OCI-LY7 (cell line): ENCODE measurements at regions of chr12 and their contacts with region 1.

Region 1: GRCh38 chr12:11486623-11487444 is 91.5 kb upstream of the PRB2 start:
- DNase-seq: peak; percentile 92
- H3K4me3 ChIP-seq: no peak overlapping the region
- H3K27ac ChIP-seq: no peak overlapping the region
- H3K4me1 ChIP-seq: no peaks in the 10 kb centered on the region
- CTCF ChIP-seq: peak; percentile 100

Region 2: DNA sequence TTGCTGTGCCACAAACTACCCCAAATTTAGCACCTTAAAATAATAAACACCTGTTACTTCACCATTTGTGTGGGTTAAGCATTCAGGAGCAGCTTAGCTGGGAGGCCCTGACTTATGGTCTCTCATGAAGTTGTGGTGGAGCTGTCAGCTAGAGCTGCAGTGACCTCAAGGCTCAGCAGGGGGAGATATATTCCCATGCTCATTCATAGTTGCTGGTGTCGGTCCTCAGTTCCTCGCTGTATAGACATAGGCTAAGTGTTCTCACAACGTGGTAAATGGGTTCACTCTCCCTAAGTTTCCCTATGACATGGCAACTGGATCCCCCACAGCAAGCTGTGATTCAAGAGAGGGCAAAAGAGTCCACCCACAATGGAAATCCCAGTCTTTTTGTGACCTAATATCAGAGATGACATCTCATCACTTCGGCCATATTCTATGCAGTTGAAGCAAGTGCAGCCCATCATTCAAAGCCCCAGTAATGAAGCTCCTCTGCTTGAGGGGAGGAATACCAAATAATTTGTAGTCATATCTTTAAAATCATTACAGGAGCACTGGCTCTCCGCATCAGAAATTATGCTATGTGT is 258.4 kb before region 1 on chr12:
- CTCF ChIA-PET with region 1: interaction called, 4 read pairs
- POLR2A ChIA-PET with region 1: no interaction called
- intact Hi-C with region 1: loop called (anchors 1 kb)
- DNase-seq: peak; percentile 45
- H3K4me3 ChIP-seq: no peak overlapping the region
- H3K27ac ChIP-seq: no peak overlapping the region
- H3K4me1 ChIP-seq: no peaks in the 10 kb centered on the region
- CTCF ChIP-seq: peak; percentile 79

Region 3: GRCh38 chr12:11812586-11813427 is 326.0 kb after region 1 on chr12:
- CTCF ChIA-PET with region 1: no interaction called
- POLR2A ChIA-PET with region 1: no interaction called
- intact Hi-C with region 1: no loop called
- DNase-seq: peak; percentile 73
- H3K4me3 ChIP-seq: peak overlapping the region; percentile 54
- H3K27ac ChIP-seq: peak overlapping the region; percentile 78
- H3K4me1 ChIP-seq: peaks cover 64% of the 10 kb centered on the region
- CTCF ChIP-seq: peak; percentile 54